ENCODE measurements at regions of chr22 and their contacts with region 1.

Region 1: GRCh38 chr22:46367707-46368191 is 32.2 kb downstream of the TRMU start:
- H3K4me3 ChIP-seq: no peak overlapping the region
- H3K27ac ChIP-seq: no peak overlapping the region
- H3K4me1 ChIP-seq: no peaks in the 10 kb centered on the region
- CTCF ChIP-seq: peak; percentile 96

Region 2: GRCh38 chr22:46296257-46297150 is 71.2 kb before region 1 on chr22 and contains the start of gene GTSE1:
- CTCF ChIA-PET with region 1: no interaction called
- POLR2A ChIA-PET with region 1: no interaction called
- H3K4me3 ChIP-seq: peak within 1 kb of the TSS; percentile 94
- H3K27ac ChIP-seq: peak within 1 kb of the TSS; percentile 81
- H3K4me1 ChIP-seq: peaks cover 8% of the 10 kb centered on the region
- CTCF ChIP-seq: peak; percentile 86

Region 3: GRCh38 chr22:46355371-46355995 is 12.3 kb before region 1 on chr22:
- CTCF ChIA-PET with region 1: interaction called, 15 read pairs
- POLR2A ChIA-PET with region 1: interaction called, 3 read pairs
- H3K4me3 ChIP-seq: no peak overlapping the region
- H3K27ac ChIP-seq: no peak overlapping the region
- H3K4me1 ChIP-seq: peaks cover 6% of the 10 kb centered on the region; the same call in 1 of the 2 replicates
- CTCF ChIP-seq: peak; percentile 82

Region 4: DNA sequence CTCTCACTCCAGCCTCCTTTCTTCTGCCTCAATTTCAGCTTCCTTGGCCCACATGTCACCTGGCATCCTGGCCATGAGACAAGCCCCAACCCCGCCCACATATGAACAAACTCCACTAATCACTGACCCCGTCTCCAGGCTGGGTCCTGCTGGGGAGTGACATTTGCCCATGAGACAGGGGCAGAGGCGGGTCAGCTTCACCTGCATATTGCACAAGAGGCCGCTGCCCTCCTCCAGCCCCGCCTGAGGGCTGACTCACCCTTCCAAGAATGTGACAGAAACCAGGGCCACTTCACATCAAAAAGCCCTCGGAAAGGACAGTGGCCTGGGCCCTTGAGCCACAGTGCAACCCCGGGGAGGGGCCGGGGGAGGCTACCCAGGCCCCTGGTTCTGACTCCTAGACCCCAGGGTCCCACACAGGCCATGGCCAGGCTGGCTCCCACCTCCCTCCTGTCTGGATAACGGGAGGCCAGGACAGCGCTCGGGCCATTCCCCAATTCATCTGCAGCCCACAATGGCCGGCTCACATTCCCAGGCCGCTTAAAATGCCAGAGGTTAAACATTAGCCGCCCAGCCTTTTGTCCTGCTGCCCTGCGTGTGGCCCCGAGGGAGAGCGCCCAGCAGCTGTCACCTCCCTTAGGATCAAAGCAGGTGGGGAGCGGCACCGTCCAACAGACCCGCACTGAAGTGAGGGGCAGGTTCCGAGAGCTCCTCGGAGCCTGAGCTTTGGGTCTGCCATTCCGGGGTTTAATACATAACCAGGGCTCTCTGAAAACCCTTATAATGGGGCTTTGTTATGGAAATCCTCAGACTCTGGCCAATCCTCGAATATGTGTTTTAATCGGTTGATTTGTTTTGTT is 10.0 kb after region 1 on chr22:
- CTCF ChIA-PET with region 1: interaction called, 12 read pairs
- POLR2A ChIA-PET with region 1: no interaction called
- H3K4me3 ChIP-seq: no peak overlapping the region
- H3K27ac ChIP-seq: no peak overlapping the region
- H3K4me1 ChIP-seq: peaks cover 9% of the 10 kb centered on the region; the same call in 1 of the 2 replicates
- CTCF ChIP-seq: no peak

Region 5: DNA sequence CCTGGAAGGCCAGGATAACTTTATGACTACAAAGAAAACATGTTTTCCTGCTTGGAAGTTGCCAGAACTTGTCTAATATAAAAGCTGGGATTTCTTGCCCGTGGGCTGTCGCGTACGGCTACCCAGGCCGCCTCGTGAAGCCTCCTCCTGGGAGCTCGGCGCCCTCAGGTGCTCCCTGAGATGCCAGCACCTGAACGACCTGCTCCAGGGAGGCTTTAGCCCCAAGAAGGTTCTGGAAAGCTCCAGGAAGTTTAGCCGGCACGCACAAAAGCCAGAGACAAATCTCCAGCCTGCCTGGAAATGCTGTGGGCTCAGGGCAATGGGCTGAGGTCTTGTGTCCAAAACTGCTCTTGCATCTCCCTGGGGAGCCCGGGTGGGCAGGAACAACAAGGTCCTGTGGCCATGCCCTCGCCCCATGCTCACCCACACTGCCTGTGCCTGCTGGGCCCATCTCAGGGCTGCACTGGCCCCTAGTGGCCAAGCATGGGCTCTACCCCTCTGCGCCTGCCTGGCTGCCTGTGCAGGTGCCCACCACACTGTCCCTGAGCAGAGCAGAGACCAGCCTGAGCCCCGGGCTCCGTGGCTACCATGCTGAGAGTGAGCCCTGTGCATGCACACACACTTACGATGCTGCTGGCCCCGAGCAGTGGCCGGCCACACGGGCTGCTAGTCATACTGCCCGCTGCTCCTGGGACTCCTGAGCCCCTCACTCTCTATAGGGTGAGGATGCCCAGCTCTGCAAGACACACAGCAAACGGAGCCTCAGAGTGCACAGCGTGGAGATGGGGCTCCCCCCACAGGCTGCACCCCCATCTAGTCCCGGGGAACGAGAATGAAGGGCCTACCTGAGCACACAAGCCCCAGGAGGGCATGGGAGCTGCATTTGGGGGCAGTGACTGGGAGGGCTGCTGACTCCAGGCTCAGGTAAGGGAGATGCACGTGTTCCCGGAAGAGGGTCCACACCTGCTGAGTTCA is 174.5 kb after region 1 on chr22:
- CTCF ChIA-PET with region 1: interaction called, 77 read pairs
- POLR2A ChIA-PET with region 1: interaction called, 3 read pairs
- H3K4me3 ChIP-seq: no peak overlapping the region
- H3K27ac ChIP-seq: no peak overlapping the region
- H3K4me1 ChIP-seq: peaks cover 5% of the 10 kb centered on the region
- CTCF ChIP-seq: peak; percentile 95

Region 6: DNA sequence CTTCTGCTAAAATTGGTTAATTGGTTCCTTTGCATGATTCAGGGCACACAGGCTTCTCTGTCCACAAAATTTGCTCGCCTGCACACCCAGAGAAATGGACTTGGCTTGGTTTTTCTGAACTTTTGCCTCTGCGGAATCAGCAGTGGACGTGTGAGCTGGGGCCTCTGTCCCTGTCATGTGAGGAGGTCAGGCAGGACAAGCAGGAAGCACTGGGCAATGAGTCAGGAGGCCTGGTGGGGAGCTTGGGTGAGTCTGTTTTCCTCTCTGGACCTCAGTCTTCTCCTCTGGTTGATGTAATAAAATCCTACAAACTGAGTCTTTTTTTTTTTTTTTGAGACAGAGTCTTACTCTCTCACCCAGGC is 180.1 kb after region 1 on chr22:
- CTCF ChIA-PET with region 1: interaction called, 77 read pairs
- POLR2A ChIA-PET with region 1: no interaction called
- H3K4me3 ChIP-seq: no peak overlapping the region
- H3K27ac ChIP-seq: no peak overlapping the region
- H3K4me1 ChIP-seq: no peaks in the 10 kb centered on the region
- CTCF ChIP-seq: no peak